CD8-positive, alpha-beta T cell (primary cell): ENCODE measurements at regions of chr2 and their contacts with region 1.

Region 1: DNA sequence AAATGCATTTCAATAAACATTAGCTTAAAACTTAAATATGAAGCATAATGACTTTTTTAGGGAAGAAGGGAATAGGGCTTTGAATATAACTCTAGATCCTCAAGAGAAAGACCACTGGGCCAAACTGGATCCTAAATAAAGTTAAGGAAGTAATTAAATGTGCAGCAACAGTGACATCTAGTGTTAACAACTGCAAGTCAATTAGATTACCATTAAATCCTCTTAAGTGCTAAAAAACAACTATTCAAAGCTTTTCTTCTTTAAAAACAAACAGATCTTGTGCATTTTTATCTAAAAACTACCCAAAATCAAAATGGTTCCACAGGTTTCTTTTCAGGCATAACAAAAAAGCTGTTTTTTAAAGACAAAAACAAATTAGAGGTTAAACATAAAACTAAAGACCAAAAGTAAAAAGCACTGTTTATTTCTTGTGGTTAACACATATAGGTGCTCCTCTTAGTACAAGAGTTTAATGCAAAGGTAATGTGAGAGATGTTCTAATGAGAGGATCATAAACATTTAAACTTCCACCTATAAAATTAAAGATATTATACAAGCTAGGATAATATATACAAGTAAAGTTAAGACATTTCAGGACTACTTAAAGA is 111.4 kb downstream of the THADA start:
- DNase-seq: peak in 2 of 9 experiments; percentile 73 to 82
- ATAC-seq: peak; percentile 34
- H3K4me3 ChIP-seq: no peak overlapping the region
- H3K4me3 Mint-ChIP-seq: no peak overlapping the region
- H3K27ac ChIP-seq: no peak overlapping the region
- H3K27ac Mint-ChIP-seq: no peak overlapping the region
- H3K4me1 ChIP-seq: no peaks in the 10 kb centered on the region
- H3K4me1 Mint-ChIP-seq: peaks cover 11% of the 10 kb centered on the region
- H3K27me3 ChIP-seq: no peaks in the 10 kb centered on the region
- H3K27me3 Mint-ChIP-seq: no peaks in the 10 kb centered on the region
- CTCF ChIP-seq: peak; percentile 84

Region 2: GRCh38 chr2:42585821-42586221 is 898.6 kb before region 1 on chr2:
- CTCF ChIA-PET with region 1: no interaction called
- POLR2A ChIA-PET with region 1: no interaction called
- intact Hi-C with region 1: no loop called
- DNase-seq: no peak
- ATAC-seq: no peak
- H3K4me3 ChIP-seq: no peak overlapping the region
- H3K4me3 Mint-ChIP-seq: no peak overlapping the region
- H3K27ac ChIP-seq: no peak overlapping the region
- H3K27ac Mint-ChIP-seq: no peak overlapping the region
- H3K4me1 ChIP-seq: no peaks in the 10 kb centered on the region
- H3K4me1 Mint-ChIP-seq: peaks cover 20% of the 10 kb centered on the region
- H3K27me3 ChIP-seq: no peaks in the 10 kb centered on the region
- H3K27me3 Mint-ChIP-seq: no peaks in the 10 kb centered on the region
- CTCF ChIP-seq: no peak

Region 3: GRCh38 chr2:42663106-42663780 is 821.2 kb before region 1 on chr2:
- CTCF ChIA-PET with region 1: no interaction called
- POLR2A ChIA-PET with region 1: no interaction called
- intact Hi-C with region 1: no loop called
- DNase-seq: peak; percentile 24 to 84 (median 60)
- ATAC-seq: peak; percentile 100
- H3K4me3 ChIP-seq: no peak overlapping the region
- H3K4me3 Mint-ChIP-seq: peak overlapping the region; percentile 32
- H3K27ac ChIP-seq: no peak overlapping the region
- H3K27ac Mint-ChIP-seq: peak overlapping the region; percentile 85
- H3K4me1 ChIP-seq: peaks cover 10% of the 10 kb centered on the region
- H3K4me1 Mint-ChIP-seq: peaks cover 25% of the 10 kb centered on the region
- H3K27me3 ChIP-seq: no peaks in the 10 kb centered on the region
- H3K27me3 Mint-ChIP-seq: no peaks in the 10 kb centered on the region
- CTCF ChIP-seq: peak; percentile 91

Region 4: DNA sequence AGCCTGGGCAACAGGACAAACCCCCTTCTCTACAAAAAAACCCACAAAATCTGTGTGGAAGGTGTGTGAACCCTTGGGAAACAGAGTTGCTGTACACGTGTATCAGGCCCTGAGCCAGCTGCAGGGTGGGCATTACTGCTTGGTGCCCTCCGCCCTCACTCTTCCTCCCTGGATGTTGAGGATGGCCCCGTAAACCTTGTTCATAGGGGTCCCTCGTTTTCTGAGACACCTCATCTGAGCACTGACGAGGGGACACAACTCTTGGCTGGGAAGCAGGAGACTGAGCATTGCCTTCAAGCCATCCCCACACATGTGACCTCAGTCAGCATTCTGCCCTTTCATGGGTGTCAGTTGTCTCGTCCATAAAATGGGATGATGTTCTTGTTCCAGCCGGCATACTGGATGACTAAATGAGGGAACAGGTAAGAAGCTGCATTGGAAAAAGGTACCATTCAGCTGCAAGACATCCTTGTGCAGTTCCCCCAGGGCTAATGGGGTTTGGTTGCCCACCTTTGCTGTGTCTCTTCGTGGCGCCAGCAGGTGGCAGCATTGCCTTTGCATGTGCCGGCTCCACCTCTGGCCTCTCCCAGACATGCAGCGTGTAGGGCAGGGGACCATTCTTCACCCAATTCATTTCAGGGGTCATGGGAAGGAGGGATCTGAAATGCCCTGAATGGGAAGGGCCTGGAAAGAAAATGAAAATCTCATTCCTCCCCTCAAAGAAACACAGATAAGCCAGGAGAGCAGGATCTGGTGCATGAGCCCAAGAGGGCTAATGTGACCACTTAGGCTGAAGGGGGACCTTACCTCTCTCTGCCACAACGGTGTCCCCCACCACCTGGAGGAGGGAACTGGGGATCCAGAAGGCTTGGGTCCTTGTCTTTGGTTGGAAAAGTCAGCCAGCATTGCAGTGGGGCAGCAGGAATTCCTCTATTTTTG is 655.7 kb before region 1 on chr2:
- CTCF ChIA-PET with region 1: interaction called, 12 read pairs
- POLR2A ChIA-PET with region 1: no interaction called
- intact Hi-C with region 1: loop called (anchors 1 to 2 kb)
- DNase-seq: peak; percentile 34 to 84 (median 70)
- ATAC-seq: peak; percentile 97
- H3K4me3 ChIP-seq: no peak overlapping the region
- H3K4me3 Mint-ChIP-seq: no peak overlapping the region
- H3K27ac ChIP-seq: no peak overlapping the region
- H3K27ac Mint-ChIP-seq: no peak overlapping the region
- H3K4me1 ChIP-seq: peaks cover 9% of the 10 kb centered on the region
- H3K4me1 Mint-ChIP-seq: peaks cover 17% of the 10 kb centered on the region
- H3K27me3 ChIP-seq: peaks cover 0 to 2% of the 10 kb centered on the region in 2 experiments
- H3K27me3 Mint-ChIP-seq: peaks cover 1% of the 10 kb centered on the region
- CTCF ChIP-seq: peak; percentile 88

Region 5: GRCh38 chr2:42944779-42945415 is 539.5 kb before region 1 on chr2:
- CTCF ChIA-PET with region 1: interaction called, 82 read pairs
- POLR2A ChIA-PET with region 1: interaction called, 5 read pairs
- intact Hi-C with region 1: loop called (anchors 1 kb)
- DNase-seq: no peak
- ATAC-seq: no peak
- H3K4me3 ChIP-seq: no peak overlapping the region
- H3K4me3 Mint-ChIP-seq: no peak overlapping the region
- H3K27ac ChIP-seq: no peak overlapping the region
- H3K27ac Mint-ChIP-seq: no peak overlapping the region
- H3K4me1 ChIP-seq: no peaks in the 10 kb centered on the region
- H3K4me1 Mint-ChIP-seq: peaks cover 3% of the 10 kb centered on the region
- H3K27me3 ChIP-seq: no peaks in the 10 kb centered on the region
- H3K27me3 Mint-ChIP-seq: no peaks in the 10 kb centered on the region
- CTCF ChIP-seq: no peak

Region 6: GRCh38 chr2:42974721-42975717 is 509.4 kb before region 1 on chr2:
- CTCF ChIA-PET with region 1: interaction called, 47 read pairs
- POLR2A ChIA-PET with region 1: no interaction called
- intact Hi-C with region 1: loop called in 1 of 2 experiments (anchors 1 kb)
- DNase-seq: peak; percentile 27 to 79 (median 60)
- ATAC-seq: peak; percentile 78
- H3K4me3 ChIP-seq: no peak overlapping the region
- H3K4me3 Mint-ChIP-seq: no peak overlapping the region
- H3K27ac ChIP-seq: no peak overlapping the region
- H3K27ac Mint-ChIP-seq: no peak overlapping the region
- H3K4me1 ChIP-seq: peaks cover 8% of the 10 kb centered on the region
- H3K4me1 Mint-ChIP-seq: peaks cover 15% of the 10 kb centered on the region
- H3K27me3 ChIP-seq: no peaks in the 10 kb centered on the region
- H3K27me3 Mint-ChIP-seq: no peaks in the 10 kb centered on the region
- CTCF ChIP-seq: peak; percentile 71

Region 7: GRCh38 chr2:43123981-43124686 is 360.3 kb before region 1 on chr2:
- CTCF ChIA-PET with region 1: interaction called, 37 read pairs
- POLR2A ChIA-PET with region 1: interaction called, 3 read pairs
- intact Hi-C with region 1: loop called (anchors 1 kb)
- DNase-seq: peak in 2 of 9 experiments; percentile 38 to 40
- ATAC-seq: peak; percentile 24
- H3K4me3 ChIP-seq: no peak overlapping the region
- H3K4me3 Mint-ChIP-seq: peak overlapping the region; percentile 68
- H3K27ac ChIP-seq: no peak overlapping the region
- H3K27ac Mint-ChIP-seq: peak overlapping the region; percentile 82
- H3K4me1 ChIP-seq: peaks cover 60% of the 10 kb centered on the region
- H3K4me1 Mint-ChIP-seq: peaks cover 65% of the 10 kb centered on the region
- H3K27me3 ChIP-seq: no peaks in the 10 kb centered on the region
- H3K27me3 Mint-ChIP-seq: no peaks in the 10 kb centered on the region
- CTCF ChIP-seq: no peak

Region 8: DNA sequence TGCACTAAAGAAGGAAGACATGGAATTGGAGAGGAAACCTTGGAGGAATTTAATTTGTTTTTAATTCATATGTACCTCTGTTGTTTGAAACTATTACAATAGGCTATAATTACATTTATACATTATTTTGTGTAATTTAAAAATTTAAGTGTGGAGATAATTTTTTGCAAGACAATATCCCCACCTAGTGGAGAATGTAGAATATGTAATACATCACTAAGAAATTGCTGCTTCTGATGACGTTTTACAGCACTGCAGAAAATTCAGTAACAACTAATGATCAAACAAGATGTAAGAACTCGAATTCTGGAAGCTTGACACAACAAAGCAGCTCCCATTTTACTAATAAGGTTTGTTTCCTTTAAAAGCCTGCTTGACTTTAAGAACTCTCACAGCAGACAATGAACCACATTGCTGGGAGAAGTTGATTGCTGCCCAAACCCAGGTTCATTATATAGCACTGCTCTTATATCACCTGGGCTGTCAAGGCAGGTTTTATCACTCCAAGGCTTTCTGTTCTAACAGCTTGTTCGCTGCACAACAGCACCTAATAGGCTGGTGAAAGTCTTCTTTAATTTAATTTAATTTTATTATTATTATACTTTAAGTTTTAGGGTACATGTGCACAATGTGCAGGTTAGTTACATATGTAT is 58.0 kb after region 1 on chr2:
- CTCF ChIA-PET with region 1: interaction called, 13 read pairs
- POLR2A ChIA-PET with region 1: no interaction called
- intact Hi-C with region 1: loop called (anchors 2 to 10 kb)
- DNase-seq: peak in 2 of 9 experiments; percentile 48 to 66
- ATAC-seq: peak; percentile 88
- H3K4me3 ChIP-seq: no peak overlapping the region
- H3K4me3 Mint-ChIP-seq: no peak overlapping the region
- H3K27ac ChIP-seq: no peak overlapping the region
- H3K27ac Mint-ChIP-seq: no peak overlapping the region
- H3K4me1 ChIP-seq: no peaks in the 10 kb centered on the region
- H3K4me1 Mint-ChIP-seq: peaks cover 16% of the 10 kb centered on the region
- H3K27me3 ChIP-seq: no peaks in the 10 kb centered on the region
- H3K27me3 Mint-ChIP-seq: no peaks in the 10 kb centered on the region
- CTCF ChIP-seq: peak; percentile 87